T-cell (primary cell): ENCODE measurements at regions of chr2 and their contacts with region 1.

Region 1: DNA sequence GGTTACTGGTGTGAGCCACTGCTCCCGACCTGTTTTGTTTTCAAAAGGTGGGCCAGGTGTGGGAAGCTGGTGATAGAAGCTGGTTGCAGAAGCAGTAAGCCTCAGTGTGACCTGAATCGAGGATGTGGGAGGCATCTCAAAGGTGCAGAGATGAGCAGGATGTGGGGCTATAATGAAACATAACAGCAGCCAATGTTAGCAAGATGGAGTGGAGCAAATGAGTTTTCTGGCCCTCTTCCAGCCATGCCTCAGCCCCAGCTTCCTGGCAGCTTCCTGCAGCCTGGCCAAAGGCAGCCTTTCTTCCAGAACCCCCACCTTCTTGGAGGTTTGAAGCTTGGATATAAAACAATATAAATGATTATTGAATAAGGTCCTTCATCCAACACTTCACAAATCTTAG is 184.8 kb downstream of the NCK2 start:
- DNase-seq: peak in 34 of 35 experiments; percentile 14 to 74 (median 51)
- ATAC-seq: peak; percentile 85 to 86 (median 85)
- H3K4me3 ChIP-seq: no peak overlapping the region
- H3K4me3 Mint-ChIP-seq: peak overlapping the region in 2 of 3 donors; percentile 26 to 71
- H3K27ac ChIP-seq: peak overlapping the region; percentile 63
- H3K27ac Mint-ChIP-seq: peak overlapping the region; percentile 96
- H3K4me1 ChIP-seq: peaks cover 40 to 84% of the 10 kb centered on the region in 2 experiments
- H3K4me1 Mint-ChIP-seq: peaks cover 66 to 74% (median 72%) of the 10 kb centered on the region in 3 donors
- H3K27me3 ChIP-seq: no peaks in the 10 kb centered on the region
- H3K27me3 Mint-ChIP-seq: no peaks in the 10 kb centered on the region

Region 2: DNA sequence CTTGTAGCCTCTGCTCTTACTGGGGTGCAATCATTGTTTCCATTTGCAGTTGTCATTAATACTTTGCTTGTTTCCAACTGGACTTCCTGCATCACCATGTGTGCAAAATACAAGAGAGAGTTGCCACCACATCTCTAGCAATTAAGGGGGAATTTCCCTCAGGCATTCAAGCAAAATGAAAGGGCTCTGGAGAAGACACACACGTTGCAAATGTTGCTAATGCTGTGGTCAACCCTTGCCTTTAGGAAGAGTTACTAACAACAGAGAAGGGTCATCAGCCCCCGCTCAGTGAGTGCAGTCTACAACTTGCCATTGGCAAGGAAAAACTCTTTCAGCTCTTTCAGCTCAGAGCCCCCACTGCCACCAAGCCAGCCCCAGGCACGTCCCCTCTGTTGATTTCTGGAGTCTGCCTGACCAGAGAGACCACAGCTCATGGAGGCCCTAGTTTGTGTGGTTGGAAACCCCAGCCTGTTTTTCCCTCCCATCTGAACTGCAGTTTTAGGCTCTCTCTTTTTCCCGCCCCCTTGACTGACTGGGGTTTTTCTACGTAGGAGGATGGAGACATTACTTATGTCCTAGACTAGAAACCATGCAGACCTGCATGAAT is 713.8 kb before region 1 on chr2:
- CTCF ChIA-PET with region 1: no interaction called
- POLR2A ChIA-PET with region 1: no interaction called
- DNase-seq: no peak
- ATAC-seq: no peak
- H3K4me3 ChIP-seq: no peak overlapping the region
- H3K4me3 Mint-ChIP-seq: no peak overlapping the region
- H3K27ac ChIP-seq: no peak overlapping the region
- H3K27ac Mint-ChIP-seq: no peak overlapping the region
- H3K4me1 ChIP-seq: no peaks in the 10 kb centered on the region
- H3K4me1 Mint-ChIP-seq: peaks cover 1 to 6% (median 4%) of the 10 kb centered on the region in 3 donors
- H3K27me3 ChIP-seq: peaks cover 0 to 9% of the 10 kb centered on the region in 2 experiments
- H3K27me3 Mint-ChIP-seq: peaks cover 4 to 14% of the 10 kb centered on the region in 2 donors

Region 3: DNA sequence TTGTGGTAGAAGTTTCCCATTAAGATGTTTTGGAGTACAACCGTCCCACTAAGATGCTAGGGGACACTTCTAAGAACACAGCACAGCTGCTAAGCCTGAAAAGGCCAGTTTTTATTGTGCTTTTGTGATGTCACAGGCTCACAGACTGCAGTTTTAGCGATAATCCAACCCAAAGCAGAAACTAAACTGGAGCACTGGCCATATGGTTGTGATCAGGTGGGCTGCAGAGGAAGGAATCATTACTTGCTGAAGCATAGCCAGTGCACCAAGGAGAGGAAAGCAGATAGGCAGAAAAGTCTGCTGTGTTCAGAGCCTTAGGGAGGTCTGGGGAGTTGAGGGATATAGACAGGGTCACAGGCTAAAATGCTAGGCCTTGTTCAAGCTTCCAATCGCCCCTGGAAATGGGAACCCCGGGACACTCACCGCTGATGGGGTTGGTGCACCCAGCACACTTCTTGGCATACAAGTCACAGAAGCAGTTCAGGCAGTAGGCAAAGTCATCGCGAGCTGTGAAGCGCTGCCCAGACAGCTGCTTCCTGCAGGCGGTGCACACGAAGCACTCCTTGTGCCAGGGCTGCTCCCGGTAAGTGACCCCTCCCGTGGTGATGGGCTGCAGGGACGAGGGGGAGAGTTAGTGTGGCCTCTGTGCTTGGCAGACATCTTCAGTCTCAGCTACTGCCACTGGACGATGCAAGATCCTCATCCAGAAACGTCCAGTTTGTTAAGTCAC is 566.5 kb before region 1 on chr2:
- CTCF ChIA-PET with region 1: interaction called in 1 of 2 experiments, 10 read pairs
- POLR2A ChIA-PET with region 1: no interaction called
- DNase-seq: no peak
- ATAC-seq: peak in 2 of 4 experiments; percentile 29 to 44
- H3K4me3 ChIP-seq: no peak overlapping the region
- H3K4me3 Mint-ChIP-seq: no peak overlapping the region
- H3K27ac ChIP-seq: no peak overlapping the region
- H3K27ac Mint-ChIP-seq: peak overlapping the region in 1 of 2 donors; percentile 53
- H3K4me1 ChIP-seq: peaks cover 12 to 18% of the 10 kb centered on the region in 2 experiments
- H3K4me1 Mint-ChIP-seq: peaks cover 31 to 35% (median 32%) of the 10 kb centered on the region in 3 donors
- H3K27me3 ChIP-seq: no peaks in the 10 kb centered on the region
- H3K27me3 Mint-ChIP-seq: no peaks in the 10 kb centered on the region

Region 4: GRCh38 chr2:105857076-105857740 is 72.3 kb before region 1 on chr2:
- CTCF ChIA-PET with region 1: no interaction called
- POLR2A ChIA-PET with region 1: no interaction called
- DNase-seq: peak in 16 of 35 experiments; percentile 10 to 79 (median 22)
- ATAC-seq: peak; percentile 21 to 63 (median 36)
- H3K4me3 ChIP-seq: peak overlapping the region in 1 of 2 donors; percentile 44
- H3K4me3 Mint-ChIP-seq: peak overlapping the region; percentile 74 to 81 (median 79)
- H3K27ac ChIP-seq: peak overlapping the region; percentile 86
- H3K27ac Mint-ChIP-seq: peak overlapping the region; percentile 97 to 98
- H3K4me1 ChIP-seq: peaks cover 49 to 68% of the 10 kb centered on the region in 2 experiments
- H3K4me1 Mint-ChIP-seq: peaks cover 86 to 92% (median 90%) of the 10 kb centered on the region in 3 donors
- H3K27me3 ChIP-seq: no peaks in the 10 kb centered on the region
- H3K27me3 Mint-ChIP-seq: no peaks in the 10 kb centered on the region

Region 5: DNA sequence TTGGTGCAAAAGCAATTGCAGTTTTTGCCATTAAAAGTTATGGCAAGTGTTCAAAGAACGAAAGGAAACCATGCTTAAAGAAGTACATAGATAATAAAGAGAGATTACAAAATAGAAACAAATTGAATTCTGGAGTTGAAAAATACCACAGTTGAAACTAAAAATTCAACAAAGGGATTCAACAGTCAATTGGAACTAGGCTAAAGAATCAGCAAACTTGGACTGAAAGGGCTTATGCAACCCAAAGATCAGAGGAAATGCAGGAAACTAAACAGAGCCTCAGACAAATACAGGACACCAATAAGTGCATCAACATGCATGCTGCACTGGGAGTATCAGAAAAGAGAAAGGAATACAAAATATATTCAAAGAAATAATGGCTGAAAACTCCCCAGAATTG is 224.3 kb after region 1 on chr2:
- CTCF ChIA-PET with region 1: no interaction called
- POLR2A ChIA-PET with region 1: no interaction called
- DNase-seq: no peak
- ATAC-seq: no peak
- H3K4me3 ChIP-seq: no peak overlapping the region
- H3K4me3 Mint-ChIP-seq: no peak overlapping the region
- H3K27ac ChIP-seq: no peak overlapping the region
- H3K27ac Mint-ChIP-seq: peak overlapping the region; percentile 70 to 85
- H3K4me1 ChIP-seq: peaks cover 16 to 19% of the 10 kb centered on the region in 2 experiments
- H3K4me1 Mint-ChIP-seq: peaks cover 68 to 91% (median 82%) of the 10 kb centered on the region in 3 donors
- H3K27me3 ChIP-seq: no peaks in the 10 kb centered on the region
- H3K27me3 Mint-ChIP-seq: no peaks in the 10 kb centered on the region